ENCODE measurements at regions of chr22 and their contacts with region 1.

Region 1: GRCh38 chr22:38744981-38745380 is 10.8 kb downstream of the SUN2 start:
- DNase-seq: no peak
- H3K4me3 Mint-ChIP-seq: no peak overlapping the region
- H3K27ac Mint-ChIP-seq: peak overlapping the region; percentile 49
- H3K4me1 Mint-ChIP-seq: peaks cover 42% of the 10 kb centered on the region
- H3K27me3 Mint-ChIP-seq: no peaks in the 10 kb centered on the region

Region 2: GRCh38 chr22:38724926-38725571 is 19.9 kb before region 1 on chr22:
- CTCF ChIA-PET with region 1: interaction called, 16 read pairs
- POLR2A ChIA-PET with region 1: interaction called, 479 read pairs
- DNase-seq: peak; percentile 40
- H3K4me3 Mint-ChIP-seq: no peak overlapping the region
- H3K27ac Mint-ChIP-seq: peak overlapping the region; percentile 13
- H3K4me1 Mint-ChIP-seq: peaks cover 3% of the 10 kb centered on the region
- H3K27me3 Mint-ChIP-seq: no peaks in the 10 kb centered on the region

Region 3: GRCh38 chr22:38755911-38756532 is 11.0 kb after region 1 on chr22 and contains the start of gene SUN2:
- CTCF ChIA-PET with region 1: no interaction called
- POLR2A ChIA-PET with region 1: interaction called, 479 read pairs
- DNase-seq: peak; percentile 95
- H3K4me3 Mint-ChIP-seq: peak within 1 kb of the TSS; percentile 95
- H3K27ac Mint-ChIP-seq: peak within 1 kb of the TSS; percentile 100
- H3K4me1 Mint-ChIP-seq: peaks cover 53% of the 10 kb centered on the region
- H3K27me3 Mint-ChIP-seq: no peaks in the 10 kb centered on the region
- total RNA-seq, gene SUN2: 498 to 500 TPM